BJ (cell line): ENCODE measurements at regions of chr22 and their contacts with region 1.

Region 1: DNA sequence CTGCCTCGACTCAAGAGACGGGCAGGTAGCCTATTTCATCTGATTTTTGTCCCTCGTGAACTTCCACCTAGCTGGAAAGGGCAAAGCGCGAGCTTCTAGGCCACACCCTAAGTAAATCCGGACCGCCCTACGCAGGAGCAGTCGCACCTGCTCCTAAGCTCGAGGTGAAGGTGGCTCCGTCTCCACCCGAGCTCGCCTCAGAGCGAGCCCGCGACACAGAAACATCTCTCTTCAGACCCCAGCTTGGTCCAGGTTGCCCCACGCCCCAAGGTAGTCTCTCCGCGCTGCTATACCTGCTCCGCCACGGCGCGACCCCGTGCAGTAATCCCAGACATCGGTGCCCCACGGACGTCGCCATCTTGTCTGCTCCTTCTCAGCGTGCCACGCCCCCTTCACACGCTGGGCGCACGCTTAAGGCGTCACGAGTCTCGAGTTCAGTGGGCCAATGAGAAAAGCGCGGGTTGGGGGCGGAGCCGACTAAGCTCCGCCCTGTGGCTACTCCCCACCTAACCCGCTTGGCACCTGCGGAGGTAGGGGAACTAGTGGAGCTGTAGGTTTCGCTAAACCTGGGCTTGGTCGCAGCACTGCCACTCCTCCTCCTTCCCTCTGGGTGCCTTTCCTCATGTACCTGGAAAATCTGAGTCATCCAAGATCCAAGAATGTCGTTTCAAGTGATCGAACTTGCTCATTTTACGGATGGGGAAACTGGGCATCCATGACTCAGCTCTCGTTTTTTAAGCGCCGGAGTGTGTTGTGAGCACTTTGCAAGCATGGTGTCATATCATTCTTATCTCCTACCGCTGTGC is at the start of gene PISD:
- DNase-seq: no peak
- H3K4me3 ChIP-seq: peak within 1 kb of the TSS; percentile 86
- H3K27me3 ChIP-seq: no peaks in the 10 kb centered on the region
- CTCF ChIP-seq: no peak
- polyA plus RNA-seq, gene PISD: 18.7 and 26.9 TPM in 2 replicates

Region 2: GRCh38 chr22:31676700-31677099 is 14.6 kb after region 1 on chr22:
- CTCF ChIA-PET with region 1: interaction called, 17 read pairs
- POLR2A ChIA-PET with region 1: interaction called, 3 read pairs
- DNase-seq: peak; percentile 60
- H3K4me3 ChIP-seq: peak overlapping the region; percentile 35
- H3K27me3 ChIP-seq: no peaks in the 10 kb centered on the region
- CTCF ChIP-seq: no peak

Region 3: DNA sequence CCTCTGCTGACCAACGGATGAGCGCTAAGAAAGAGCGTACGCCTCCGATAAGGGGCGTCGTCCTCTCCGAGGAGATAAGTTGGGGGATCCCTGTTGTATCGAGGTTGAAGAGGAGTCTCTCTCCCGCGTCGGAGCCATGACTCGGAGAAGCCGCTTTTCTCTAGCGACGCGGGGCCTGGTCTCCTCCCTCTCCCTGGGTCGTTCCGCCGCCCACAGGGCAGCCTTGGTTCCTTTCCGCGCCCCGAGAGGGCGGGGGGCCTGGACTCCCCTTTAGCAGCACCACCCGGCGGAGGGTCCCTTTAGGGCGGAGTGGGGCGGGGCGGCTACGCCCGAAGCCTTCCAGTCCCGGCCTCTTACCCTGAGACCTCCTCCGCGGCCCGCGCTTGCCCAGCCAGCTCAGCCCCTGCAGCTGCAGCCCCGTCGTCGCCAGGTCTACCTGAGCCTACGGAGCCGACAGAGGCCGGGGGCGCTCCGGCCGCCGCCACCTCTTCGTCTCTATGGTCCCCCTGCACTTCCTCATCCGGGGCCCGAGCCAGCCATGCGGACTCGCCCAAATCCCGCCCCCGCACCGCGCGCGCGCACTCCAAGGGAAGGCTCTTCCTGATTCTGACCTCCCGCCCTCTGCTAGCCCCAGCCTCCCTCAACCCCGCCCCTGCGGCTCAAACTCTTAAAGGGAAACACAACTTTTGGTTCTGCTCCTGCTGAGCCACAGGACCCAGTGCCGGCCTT is 87.7 kb after region 1 on chr22 and contains the start of gene PRR14L:
- CTCF ChIA-PET with region 1: interaction called, 11 read pairs
- POLR2A ChIA-PET with region 1: interaction called, 16 read pairs
- DNase-seq: peak; percentile 68
- H3K4me3 ChIP-seq: peak within 1 kb of the TSS; percentile 80
- H3K27me3 ChIP-seq: no peaks in the 10 kb centered on the region
- CTCF ChIP-seq: peak; percentile 8; the same call in 1 of the 2 replicates
- polyA plus RNA-seq, gene PRR14L: 8.0 and 9.6 TPM in 2 replicates

Region 4: DNA sequence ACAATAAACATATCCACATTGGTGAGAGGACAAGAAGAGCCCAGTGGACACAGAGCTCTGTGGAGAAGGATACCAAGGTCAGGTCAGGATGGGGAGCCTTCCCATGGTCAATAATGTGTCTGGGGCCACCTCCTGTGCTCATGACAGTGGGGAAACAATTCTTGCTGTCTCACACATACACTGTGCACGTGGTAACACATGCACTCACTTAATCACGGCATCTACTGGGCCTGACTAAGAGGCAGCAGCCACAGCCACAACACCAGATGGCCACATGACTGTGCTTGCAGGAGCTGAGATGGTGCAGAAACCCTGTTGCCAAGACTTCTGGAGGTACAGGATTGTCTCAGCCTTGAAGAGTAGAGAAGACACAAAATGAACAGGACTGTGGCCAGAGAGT is 468.4 kb after region 1 on chr22:
- CTCF ChIA-PET with region 1: no interaction called
- POLR2A ChIA-PET with region 1: no interaction called
- DNase-seq: no peak
- H3K4me3 ChIP-seq: no peak overlapping the region
- H3K27me3 ChIP-seq: 0 out of 2 replicates have a peak, but pooled peaks cover 2% of the 10 kb centered on the region
- CTCF ChIP-seq: no peak